ENCODE measurements at regions of chr17 and their contacts with region 1.

Region 1: DNA sequence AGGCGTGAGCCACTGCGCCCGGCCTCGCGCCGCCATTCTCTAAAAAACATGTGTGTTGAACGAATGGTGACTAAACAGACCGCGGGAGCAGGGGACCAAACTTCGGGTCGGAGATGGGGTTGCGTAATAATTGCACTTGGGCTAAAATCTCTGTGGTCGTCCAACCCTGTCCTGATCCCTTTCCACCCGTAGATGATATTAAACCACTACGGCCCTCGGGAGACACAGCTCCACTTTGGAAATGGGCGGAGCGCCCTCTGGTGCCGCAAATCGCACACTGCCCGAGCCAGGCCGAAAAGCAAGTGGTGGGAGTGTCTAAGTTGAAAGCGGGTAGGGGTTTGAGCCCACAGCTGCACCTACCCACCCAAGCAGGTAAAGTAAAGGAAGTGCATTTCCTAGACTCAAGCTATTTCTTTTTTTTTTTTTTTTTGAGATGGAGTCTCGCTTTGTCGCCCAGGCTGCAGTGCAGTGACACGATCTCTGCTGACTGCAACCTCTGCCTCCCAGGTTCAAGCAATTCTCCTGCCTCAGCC is 17.0 kb downstream of the CAVIN1 start:
- DNase-seq: peak; percentile 89
- H3K4me3 ChIP-seq: peak overlapping the region in 1 of 2 experiments; percentile 18; a peak in 1 of 4 replicates
- H3K27ac ChIP-seq: no peak overlapping the region; a peak in 1 of 4 replicates
- H3K4me1 ChIP-seq: peaks cover 18 to 35% of the 10 kb centered on the region in 2 experiments; a peak in 3 of 4 replicates
- H3K27me3 ChIP-seq: no peaks in the 10 kb centered on the region
- CTCF ChIP-seq: peak; percentile 79
- EP300 ChIP-seq: no peak
- RAD21 ChIP-seq: peak; percentile 92

Region 2: DNA sequence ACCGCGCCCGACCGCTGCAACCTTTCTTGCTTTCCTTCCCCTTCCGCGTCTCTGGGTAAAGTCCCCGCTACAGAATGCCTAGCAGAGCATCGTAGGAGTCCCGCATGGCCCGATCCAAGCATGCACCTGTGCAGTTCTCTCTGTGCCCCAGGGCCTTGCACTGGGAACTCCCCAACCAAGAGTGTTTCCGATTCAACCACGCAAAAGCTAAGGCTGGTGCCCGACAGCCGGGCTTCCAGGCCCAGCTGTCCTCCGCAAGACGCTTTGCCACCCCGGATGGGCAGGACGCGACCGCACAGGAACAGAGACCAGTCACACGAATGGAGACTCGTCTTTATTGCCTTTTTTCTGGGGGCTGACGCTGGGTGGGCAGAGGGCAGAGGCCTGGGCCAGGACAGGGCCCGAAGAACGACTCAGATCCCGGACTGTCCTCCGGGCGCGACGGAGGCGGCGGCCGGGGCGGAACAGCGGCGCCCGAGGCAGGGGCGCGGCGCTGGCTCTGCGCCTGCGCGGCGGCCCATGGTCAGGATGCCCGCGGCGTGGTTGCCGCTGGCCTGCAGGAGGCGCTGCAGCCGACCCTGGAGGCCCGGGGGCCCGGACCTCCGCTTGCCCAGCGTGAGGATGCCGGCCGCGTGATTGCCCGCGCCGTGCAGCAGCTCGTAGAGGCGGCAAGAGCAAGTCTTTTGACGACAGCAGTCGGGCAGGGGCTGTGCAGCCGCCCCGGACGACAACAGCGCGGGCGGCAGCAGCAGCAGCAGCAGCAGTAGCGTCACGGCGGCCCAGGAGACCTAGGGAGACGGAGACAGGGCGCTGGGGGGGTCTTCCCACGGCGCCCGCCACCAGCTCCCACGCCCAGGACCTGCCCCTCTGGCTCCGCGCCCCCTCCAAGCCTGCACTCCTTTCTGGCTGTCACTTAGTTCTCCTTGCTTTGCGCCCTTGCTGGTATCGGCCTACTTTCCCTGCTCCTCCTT is 222.0 kb before region 1 on chr17:
- CTCF ChIA-PET with region 1: interaction called, 10 read pairs
- POLR2A ChIA-PET with region 1: no interaction called
- DNase-seq: peak; percentile 94
- H3K4me3 ChIP-seq: peak overlapping the region; percentile 28 to 41; a peak in 3 of 4 replicates
- H3K27ac ChIP-seq: no peak overlapping the region
- H3K4me1 ChIP-seq: peaks cover 4 to 15% of the 10 kb centered on the region in 2 experiments; a peak in 2 of 4 replicates
- H3K27me3 ChIP-seq: no peaks in the 10 kb centered on the region
- CTCF ChIP-seq: peak; percentile 70
- EP300 ChIP-seq: no peak
- RAD21 ChIP-seq: no peak

Region 3: DNA sequence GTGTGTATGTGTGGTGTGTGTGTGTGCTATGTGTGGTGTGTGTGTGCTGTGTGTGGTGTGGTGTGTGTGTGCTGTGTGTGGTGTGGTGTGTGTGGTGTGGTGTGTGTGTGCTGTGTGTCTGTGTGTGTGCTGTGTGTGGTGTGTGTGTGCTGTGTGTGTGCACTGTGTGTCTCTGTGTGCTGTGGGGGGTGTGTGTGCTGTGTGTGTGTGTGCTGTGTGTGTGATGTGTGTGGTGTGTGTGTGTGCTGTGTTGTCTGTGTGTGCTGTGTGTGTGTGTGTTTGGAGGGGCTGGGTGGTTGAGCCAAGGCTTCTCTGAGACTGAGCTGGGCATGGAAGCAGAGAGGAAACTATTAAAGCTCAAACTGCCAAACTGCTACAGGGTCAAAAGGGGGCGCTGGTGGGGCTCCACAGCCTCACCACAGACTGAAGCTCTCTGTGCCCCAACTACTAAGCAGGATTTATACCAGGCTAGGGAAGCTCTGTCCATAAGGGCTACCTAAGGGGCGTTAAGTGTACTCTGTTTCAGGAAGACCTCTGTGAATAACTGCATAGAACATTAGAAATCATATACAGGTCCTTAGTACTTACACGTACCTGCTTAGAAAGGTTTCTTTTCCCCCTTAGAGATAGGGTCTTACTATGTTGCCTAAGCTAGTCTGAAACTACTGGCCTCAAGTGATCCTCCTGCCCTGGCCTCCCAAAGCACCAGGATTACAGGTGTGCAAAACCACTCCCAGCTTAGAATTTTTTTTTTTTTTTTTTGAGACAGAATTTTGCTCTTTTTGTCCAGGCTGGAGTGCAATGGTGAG is 183.9 kb before region 1 on chr17:
- CTCF ChIA-PET with region 1: interaction called, 13 read pairs
- POLR2A ChIA-PET with region 1: no interaction called
- DNase-seq: peak; percentile 77
- H3K4me3 ChIP-seq: no peak overlapping the region; a peak in 1 of 4 replicates
- H3K27ac ChIP-seq: no peak overlapping the region
- H3K4me1 ChIP-seq: no peaks in the 10 kb centered on the region
- H3K27me3 ChIP-seq: no peaks in the 10 kb centered on the region
- CTCF ChIP-seq: peak; percentile 77
- EP300 ChIP-seq: no peak
- RAD21 ChIP-seq: peak; percentile 77

Region 4: DNA sequence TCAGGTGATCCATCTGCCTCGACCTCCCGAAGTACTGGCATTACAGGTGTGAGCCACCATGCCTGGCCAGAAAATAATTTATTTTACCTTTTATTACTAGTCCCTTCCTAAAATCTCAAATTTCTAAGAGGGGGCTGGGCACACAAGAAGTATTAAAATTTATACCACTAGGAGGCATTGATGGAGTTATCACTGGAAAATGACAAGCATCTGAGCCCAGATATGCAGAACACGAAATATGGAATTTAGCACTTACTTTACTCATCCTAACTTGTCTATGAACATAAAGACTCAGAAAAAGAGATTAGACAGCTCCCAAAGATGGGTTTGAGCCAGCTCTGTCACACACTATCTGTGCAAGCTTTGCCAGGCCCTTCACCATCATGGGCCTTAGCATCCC is 71.4 kb before region 1 on chr17:
- CTCF ChIA-PET with region 1: interaction called, 683 read pairs
- POLR2A ChIA-PET with region 1: no interaction called
- DNase-seq: no peak
- H3K4me3 ChIP-seq: no peak overlapping the region
- H3K27ac ChIP-seq: 0 out of 4 replicates have a peak overlapping the region, but pooled peaks of 1 of the 2 experiments have one; percentile 9
- H3K4me1 ChIP-seq: no peaks in the 10 kb centered on the region; a peak in 1 of 4 replicates
- H3K27me3 ChIP-seq: no peaks in the 10 kb centered on the region
- CTCF ChIP-seq: peak; percentile 53
- EP300 ChIP-seq: no peak
- RAD21 ChIP-seq: 0 out of 2 replicates have a peak, but pooled peaks have one; percentile 10

Region 5: DNA sequence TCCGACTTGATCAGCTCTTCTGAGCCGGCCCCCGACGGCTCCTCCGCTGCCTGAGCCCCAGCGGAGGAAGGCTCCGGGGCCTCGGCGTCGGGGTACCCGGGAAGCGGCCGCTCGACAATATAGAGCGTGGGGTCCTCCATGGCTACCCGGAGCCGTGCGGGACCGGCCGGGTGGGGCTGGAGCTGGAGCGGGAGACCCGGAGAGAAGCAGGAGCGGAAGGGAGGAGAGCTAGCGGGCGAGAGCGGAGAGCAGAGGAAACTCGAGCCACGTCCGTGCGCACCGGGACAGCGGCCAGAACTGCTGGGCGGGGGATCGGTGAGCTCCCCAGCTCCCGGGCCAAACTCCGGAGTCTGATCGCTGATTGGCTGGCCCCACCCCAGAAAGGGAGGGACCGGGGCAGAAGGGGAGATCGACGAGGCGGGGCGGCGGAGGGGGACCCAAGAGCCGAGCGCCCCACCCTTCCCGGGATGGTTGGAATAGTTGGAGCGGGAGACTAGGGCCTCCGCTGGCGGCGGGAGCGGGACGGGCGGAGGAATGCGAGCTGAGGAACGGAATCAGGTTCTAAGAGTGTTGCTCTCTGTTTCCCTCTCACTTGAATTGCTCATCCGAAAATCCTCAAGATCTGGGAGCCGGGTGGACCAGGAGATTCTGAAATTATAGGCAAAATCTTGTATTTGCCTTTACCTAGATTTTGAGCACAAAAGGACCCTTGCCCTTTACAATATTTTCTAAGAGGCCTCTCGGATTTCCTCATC is 17.1 kb after region 1 on chr17 and contains the start of gene CAVIN1:
- CTCF ChIA-PET with region 1: interaction called, 19 read pairs
- POLR2A ChIA-PET with region 1: no interaction called
- DNase-seq: peak; percentile 83
- H3K4me3 ChIP-seq: peak within 1 kb of the TSS; percentile 66 to 100
- H3K27ac ChIP-seq: peak within 1 kb of the TSS; percentile 70 to 94
- H3K4me1 ChIP-seq: peaks cover 4 to 10% of the 10 kb centered on the region in 2 experiments; a peak in 2 of 4 replicates
- H3K27me3 ChIP-seq: no peaks in the 10 kb centered on the region
- CTCF ChIP-seq: no peak
- EP300 ChIP-seq: peak in 1 of 2 experiments; percentile 54; a peak in 1 of 4 replicates
- RAD21 ChIP-seq: no peak
- polyA plus RNA-seq, gene CAVIN1: 264 and 290 TPM in 2 replicates

Region 6: GRCh38 chr17:42484304-42484703 is 78.3 kb after region 1 on chr17:
- CTCF ChIA-PET with region 1: no interaction called
- POLR2A ChIA-PET with region 1: no interaction called
- DNase-seq: no peak
- H3K4me3 ChIP-seq: no peak overlapping the region
- H3K27ac ChIP-seq: no peak overlapping the region
- H3K4me1 ChIP-seq: no peaks in the 10 kb centered on the region
- H3K27me3 ChIP-seq: no peaks in the 10 kb centered on the region
- CTCF ChIP-seq: no peak
- EP300 ChIP-seq: no peak
- RAD21 ChIP-seq: no peak

Region 7: GRCh38 chr17:42502091-42502490 is 96.1 kb after region 1 on chr17:
- CTCF ChIA-PET with region 1: no interaction called
- POLR2A ChIA-PET with region 1: no interaction called
- DNase-seq: no peak
- H3K4me3 ChIP-seq: no peak overlapping the region
- H3K27ac ChIP-seq: no peak overlapping the region
- H3K4me1 ChIP-seq: no peaks in the 10 kb centered on the region; a peak in 1 of 4 replicates
- H3K27me3 ChIP-seq: no peaks in the 10 kb centered on the region
- CTCF ChIP-seq: no peak
- EP300 ChIP-seq: no peak
- RAD21 ChIP-seq: no peak